ENCODE measurements at regions of chr18 and their contacts with region 1.

Region 1: DNA sequence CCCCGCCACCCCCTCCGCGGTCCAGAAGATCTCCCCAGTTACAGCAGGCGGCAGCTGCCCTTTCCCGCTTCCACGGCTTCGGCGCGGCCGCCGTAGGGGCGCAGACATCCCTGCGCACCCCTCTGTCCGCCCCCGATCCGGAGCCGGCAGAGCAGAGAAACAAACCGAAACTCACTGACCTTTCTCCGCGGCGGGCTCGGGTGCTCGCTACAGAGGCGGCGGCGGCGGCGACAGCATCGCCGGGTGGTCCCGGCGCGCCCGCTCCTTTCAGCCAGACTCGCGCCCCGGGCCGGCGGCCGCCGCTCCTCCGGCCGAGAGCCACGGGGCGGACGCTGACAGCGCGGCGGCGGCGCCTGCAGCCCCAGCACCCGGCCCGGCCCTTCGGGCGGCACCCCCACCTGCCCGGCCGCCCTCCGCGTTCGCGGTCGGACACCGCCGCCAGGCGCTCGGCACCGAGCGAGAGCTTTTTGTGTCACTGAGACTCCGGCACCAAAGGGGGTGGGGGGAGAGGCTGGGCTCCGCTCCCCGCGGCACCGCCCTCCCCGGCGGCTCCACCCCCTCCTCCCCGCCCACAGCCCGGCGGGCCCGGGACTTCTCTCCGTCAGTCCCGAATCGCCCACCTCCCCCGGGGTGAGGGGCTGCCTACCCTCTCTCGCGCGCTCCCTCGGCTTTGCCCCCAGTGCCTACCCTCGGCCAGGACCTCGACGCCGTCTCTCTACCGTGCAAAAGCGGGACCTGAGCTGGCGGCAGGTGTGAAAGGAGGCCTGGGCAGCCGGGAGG is 1.4 kb upstream of the RNF152 start:
- DNase-seq: peak; percentile 79 to 93
- H3K4me3 ChIP-seq: peak overlapping the region; percentile 92 to 93
- H3K27ac ChIP-seq: peak overlapping the region; percentile 92 to 93
- H3K4me1 ChIP-seq: peaks cover 0 to 45% (median 19%) of the 10 kb centered on the region in 4 donors
- H3K27me3 ChIP-seq: no peaks in the 10 kb centered on the region
- CTCF ChIP-seq: peak; percentile 46 to 50

Region 2: DNA sequence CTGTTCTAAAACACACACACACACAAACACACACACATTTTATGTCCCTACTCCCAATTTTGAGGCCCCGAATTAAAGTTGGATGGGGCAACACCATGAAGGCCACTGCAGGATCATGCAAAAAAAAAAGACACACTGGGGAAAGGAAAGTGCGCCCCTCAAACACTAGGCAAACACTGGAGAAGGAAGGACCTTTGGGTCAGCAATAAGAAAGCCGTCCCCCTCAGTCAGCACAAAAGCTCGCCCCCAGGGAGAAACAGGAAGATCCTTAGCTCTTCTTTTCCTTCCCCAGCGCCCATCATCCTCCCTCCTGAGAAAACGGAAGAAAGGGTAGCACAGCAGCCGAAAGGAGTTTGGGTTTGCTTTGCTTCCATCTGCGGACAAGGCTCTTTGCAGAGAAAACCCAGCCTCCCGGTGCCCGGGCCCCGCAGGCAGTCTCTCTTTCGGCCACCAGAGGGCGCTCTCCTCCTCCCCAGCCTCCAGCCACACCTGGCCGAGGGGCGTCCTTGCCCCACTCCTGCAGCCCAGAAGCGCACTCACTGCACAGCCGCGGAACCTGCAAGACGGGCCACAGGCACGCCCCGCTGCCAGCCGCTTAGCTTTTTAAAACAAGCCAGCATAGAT is 312.5 kb before region 1 on chr18:
- intact Hi-C with region 1: loop called (anchors 10 kb)
- DNase-seq: peak; percentile 65 to 86
- H3K4me3 ChIP-seq: peak overlapping the region; percentile 45 to 52
- H3K27ac ChIP-seq: peak overlapping the region; percentile 56 to 60
- H3K4me1 ChIP-seq: peaks cover 0 to 38% (median 10%) of the 10 kb centered on the region in 4 donors
- H3K27me3 ChIP-seq: no peaks in the 10 kb centered on the region
- CTCF ChIP-seq: peak; percentile 96 to 99